PC-9 (cell line): ENCODE measurements at regions of chr14 and their contacts with region 1.

Region 1: DNA sequence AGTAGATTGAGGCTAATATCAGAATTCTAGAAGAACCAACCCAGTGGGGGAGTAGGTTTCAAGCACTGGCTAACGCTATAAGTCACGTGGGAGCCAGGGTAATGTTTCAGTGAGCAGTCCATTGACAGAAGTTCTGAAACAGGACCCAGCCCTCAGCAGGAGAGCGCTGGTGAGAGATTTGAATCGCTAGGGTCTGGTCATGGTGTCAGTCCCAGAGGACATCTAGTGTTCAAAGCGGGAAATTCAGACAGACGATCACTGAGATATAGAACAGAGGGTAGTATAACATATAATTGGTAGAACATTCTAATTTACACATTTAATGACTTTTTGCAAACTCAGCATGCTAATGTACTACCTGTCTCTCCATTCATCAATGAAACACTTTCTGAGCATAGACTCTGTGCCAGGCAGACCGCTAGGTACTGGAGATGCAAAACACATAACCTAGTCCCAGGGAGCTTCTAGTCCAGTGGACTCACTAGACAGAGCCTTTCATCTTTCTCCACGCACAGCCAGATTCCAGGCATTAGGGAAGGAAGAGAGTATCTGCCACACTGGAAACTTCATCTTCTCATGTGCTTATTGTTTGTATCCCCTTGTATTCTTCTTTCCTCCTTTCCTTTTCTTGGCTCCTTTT is 35.4 kb upstream of the RNASE3 start:
- DNase-seq: peak in 1 of 2 experiments; percentile 33
- H3K4me3 ChIP-seq: no peak overlapping the region
- H3K27ac ChIP-seq: no peak overlapping the region
- H3K4me1 ChIP-seq: no peaks in the 10 kb centered on the region
- H3K27me3 ChIP-seq: peaks cover 6% of the 10 kb centered on the region; the same call in 1 of the 2 replicates
- CTCF ChIP-seq: peak; percentile 65

Region 2: GRCh38 chr14:20697273-20698017 is 158.3 kb before region 1 on chr14:
- CTCF ChIA-PET with region 1: interaction called, 8 read pairs
- POLR2A ChIA-PET with region 1: no interaction called
- intact Hi-C with region 1: loop called (anchors 1 kb)
- DNase-seq: peak; percentile 51 to 55
- H3K4me3 ChIP-seq: no peak overlapping the region
- H3K27ac ChIP-seq: no peak overlapping the region
- H3K4me1 ChIP-seq: no peaks in the 10 kb centered on the region
- H3K27me3 ChIP-seq: no peaks in the 10 kb centered on the region
- CTCF ChIP-seq: peak; percentile 73

Region 3: DNA sequence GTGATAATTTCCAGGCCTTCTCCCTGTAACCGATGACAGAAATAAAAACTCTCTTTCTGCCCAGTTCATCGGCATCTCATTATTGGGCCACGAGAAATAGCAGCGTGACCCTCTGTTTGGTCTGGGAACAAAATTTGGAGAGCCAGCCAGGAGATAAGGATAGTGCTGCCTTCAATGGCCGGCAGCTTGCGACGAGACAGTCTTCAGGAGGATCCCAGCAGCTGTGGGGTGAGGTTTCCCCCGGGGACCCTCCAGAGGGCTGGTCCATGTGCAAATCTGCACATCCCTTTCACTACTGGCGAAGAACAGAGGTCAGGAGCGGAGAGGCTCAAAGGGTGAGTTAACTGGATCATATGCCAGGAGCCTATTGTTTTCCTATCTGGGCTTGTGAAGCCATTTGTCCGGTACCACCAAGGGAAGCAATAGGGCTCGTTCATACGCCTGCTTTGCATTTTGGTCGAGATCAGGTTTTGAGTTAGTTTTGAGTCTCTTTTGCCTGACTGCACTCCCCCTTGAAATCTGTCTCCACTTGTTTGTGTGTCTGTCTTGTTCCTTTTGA is 148.1 kb after region 1 on chr14:
- CTCF ChIA-PET with region 1: no interaction called
- POLR2A ChIA-PET with region 1: no interaction called
- intact Hi-C with region 1: no loop called
- DNase-seq: no peak
- H3K4me3 ChIP-seq: no peak overlapping the region
- H3K27ac ChIP-seq: no peak overlapping the region
- H3K4me1 ChIP-seq: peaks cover 6% of the 10 kb centered on the region
- H3K27me3 ChIP-seq: no peaks in the 10 kb centered on the region
- CTCF ChIP-seq: no peak

Region 4: GRCh38 chr14:21039585-21040369 is 184.0 kb after region 1 on chr14:
- CTCF ChIA-PET with region 1: no interaction called
- POLR2A ChIA-PET with region 1: no interaction called
- intact Hi-C with region 1: loop called (anchors 1 kb)
- DNase-seq: peak; percentile 22 to 43
- H3K4me3 ChIP-seq: no peak overlapping the region
- H3K27ac ChIP-seq: no peak overlapping the region
- H3K4me1 ChIP-seq: peaks cover 15% of the 10 kb centered on the region
- H3K27me3 ChIP-seq: no peaks in the 10 kb centered on the region
- CTCF ChIP-seq: peak; percentile 57; the same call in 1 of the 2 replicates

Region 5: GRCh38 chr14:21103710-21104447 is 248.1 kb after region 1 on chr14:
- CTCF ChIA-PET with region 1: no interaction called
- POLR2A ChIA-PET with region 1: no interaction called
- intact Hi-C with region 1: loop called (anchors 1 kb)
- DNase-seq: peak; percentile 81 to 88
- H3K4me3 ChIP-seq: peak overlapping the region; percentile 70
- H3K27ac ChIP-seq: peak overlapping the region; percentile 89
- H3K4me1 ChIP-seq: peaks cover 54% of the 10 kb centered on the region
- H3K27me3 ChIP-seq: no peaks in the 10 kb centered on the region
- CTCF ChIP-seq: no peak